ENCODE measurements at regions of chr14 and their contacts with region 1.

Region 1: DNA sequence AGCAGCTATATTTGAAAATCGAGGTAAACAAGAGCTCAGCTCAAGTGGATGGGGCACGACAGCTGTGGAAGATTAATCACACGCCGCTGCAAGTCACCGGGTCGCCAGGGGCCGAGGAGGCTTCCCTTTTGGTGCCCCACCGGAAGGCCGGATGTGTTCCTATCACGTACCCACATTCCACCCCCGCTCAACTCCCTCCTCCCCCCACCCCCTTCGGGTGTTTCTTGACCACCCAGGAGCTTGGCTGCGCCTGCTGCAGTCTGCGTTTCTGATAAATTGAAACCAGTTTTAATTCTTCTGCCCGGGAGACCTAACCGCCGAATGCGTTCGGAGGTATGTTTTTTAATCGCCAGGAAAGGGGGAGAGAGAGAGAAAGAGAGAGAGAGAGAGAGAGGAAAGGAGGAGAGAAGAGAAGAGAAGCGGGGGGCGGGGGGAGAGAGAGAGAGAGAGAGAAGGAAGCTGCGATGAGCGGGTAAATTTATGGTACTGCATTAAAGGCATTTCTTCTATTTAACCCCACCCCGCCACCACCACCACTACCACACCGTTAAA is 1.8 kb downstream of the SLC8A3 start:
- DNase-seq: no peak
- ATAC-seq: no peak
- H3K4me3 ChIP-seq: no peak overlapping the region; the same call in 1 of the 2 replicates
- H3K27ac ChIP-seq: no peak overlapping the region
- H3K4me1 ChIP-seq: peaks cover 12% of the 10 kb centered on the region
- H3K27me3 ChIP-seq: peaks cover 8 to 12% of the 10 kb centered on the region in 2 experiments
- CTCF ChIP-seq: no peak
- EP300 ChIP-seq: no peak
- POLR2A ChIP-seq: no peak
- RAD21 ChIP-seq: no peak

Region 2: DNA sequence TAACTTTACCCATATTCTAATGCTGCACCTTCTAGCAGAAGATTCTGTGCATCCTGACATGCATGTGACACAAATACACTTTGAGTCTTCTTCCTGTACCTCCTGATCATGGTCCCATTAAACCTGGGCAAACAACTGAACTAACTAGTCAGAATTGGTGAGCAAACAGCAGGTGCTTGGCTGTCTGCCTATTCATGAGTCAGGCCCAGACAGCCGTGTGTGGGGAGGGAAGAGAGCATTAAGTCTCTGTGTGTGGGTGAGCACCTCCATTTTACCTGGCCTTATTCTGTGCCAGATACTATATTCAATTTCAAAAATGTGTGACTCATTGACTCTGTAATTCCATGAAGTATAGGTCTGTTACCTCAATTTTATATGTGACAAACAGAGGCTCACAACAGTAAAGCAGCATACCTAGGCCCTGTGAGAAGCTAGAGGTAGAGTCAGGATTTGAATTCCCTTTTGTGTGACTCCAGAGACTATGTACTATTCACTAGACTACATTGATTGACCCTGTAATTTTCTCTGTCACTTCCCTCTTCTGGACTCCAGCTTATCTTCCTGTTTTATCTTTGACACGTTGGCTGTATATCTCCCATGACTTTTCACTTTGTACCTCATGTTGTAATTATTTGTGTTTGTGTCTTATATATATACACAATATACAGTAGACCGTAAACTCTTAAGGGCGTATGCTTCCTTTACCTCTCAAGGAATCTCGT is 543.4 kb before region 1 on chr14:
- CTCF ChIA-PET with region 1: no interaction called
- POLR2A ChIA-PET with region 1: no interaction called
- RAD21 ChIA-PET with region 1: no interaction called
- SMC1A ChIA-PET with region 1: no interaction called
- in situ Hi-C with region 1: no loop called
- intact Hi-C with region 1: no loop called
- DNase-seq: no peak
- ATAC-seq: no peak
- H3K4me3 ChIP-seq: no peak overlapping the region
- H3K27ac ChIP-seq: peak overlapping the region; percentile 83
- H3K4me1 ChIP-seq: peaks cover 45% of the 10 kb centered on the region
- H3K27me3 ChIP-seq: no peaks in the 10 kb centered on the region
- CTCF ChIP-seq: no peak
- EP300 ChIP-seq: no peak
- POLR2A ChIP-seq: no peak
- RAD21 ChIP-seq: no peak

Region 3: DNA sequence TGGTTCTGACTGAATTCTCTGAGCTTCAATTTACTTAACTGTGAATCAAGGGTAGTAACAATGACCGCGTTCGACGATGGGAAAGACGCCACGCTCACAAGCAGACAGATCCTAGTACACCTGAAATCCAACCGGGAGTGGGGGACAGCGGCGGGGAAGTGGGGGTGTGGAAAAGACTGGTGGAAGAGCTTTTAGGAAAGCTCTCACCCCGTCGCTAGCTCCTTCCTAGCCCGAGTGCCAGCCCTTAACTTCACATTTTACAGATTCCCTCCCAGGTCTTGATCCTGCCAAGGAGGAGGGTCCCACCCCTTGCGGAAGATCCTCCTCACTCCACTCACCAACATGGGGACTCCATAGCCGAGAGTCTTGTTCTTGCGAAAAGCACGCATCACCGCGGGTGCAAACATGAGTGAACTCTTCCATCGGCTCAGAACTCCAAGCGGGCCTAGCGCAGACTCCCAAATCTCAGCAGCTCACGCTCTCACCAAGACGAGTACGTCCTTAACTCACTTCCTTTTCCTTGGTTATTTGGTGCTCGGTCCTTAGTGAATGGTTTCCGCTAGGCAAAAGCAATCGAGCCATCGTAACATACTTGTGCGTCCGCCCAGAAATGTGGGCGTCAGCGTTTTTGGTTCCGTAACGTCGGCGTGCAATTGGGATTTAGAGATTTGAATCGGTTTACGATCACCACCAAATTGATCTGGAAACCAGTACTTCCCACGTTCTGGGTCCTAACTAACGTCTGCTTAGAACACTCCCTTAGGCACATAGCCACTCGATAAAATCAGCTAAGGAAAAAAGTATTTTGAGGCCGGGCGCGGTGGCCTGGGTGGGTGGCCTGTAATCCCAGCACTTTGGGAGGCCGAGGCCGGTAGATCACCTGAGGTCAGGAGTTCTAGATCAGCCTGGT is 172.5 kb after region 1 on chr14 and contains the start of gene COX16:
- CTCF ChIA-PET with region 1: no interaction called
- POLR2A ChIA-PET with region 1: interaction called, 14 read pairs
- RAD21 ChIA-PET with region 1: no interaction called
- SMC1A ChIA-PET with region 1: no interaction called
- in situ Hi-C with region 1: no loop called
- intact Hi-C with region 1: no loop called
- DNase-seq: peak; percentile 88
- ATAC-seq: peak; percentile 97
- H3K4me3 ChIP-seq: peak within 1 kb of the TSS; percentile 86
- H3K27ac ChIP-seq: peak within 1 kb of the TSS; percentile 69
- H3K4me1 ChIP-seq: no peaks in the 10 kb centered on the region; the same call in 1 of the 2 replicates
- H3K27me3 ChIP-seq: no peaks in the 10 kb centered on the region
- CTCF ChIP-seq: no peak
- EP300 ChIP-seq: peak in 1 of 2 experiments; percentile 44; a peak in 1 of 4 replicates
- POLR2A ChIP-seq: peak; percentile 91
- RAD21 ChIP-seq: no peak
- polyA plus RNA-seq, gene COX16: 197 to 209 TPM

Measured in GM12878 (cell line).